Posterior cingulate gyrus (tissue), 11 donors: ENCODE measurements at regions of chr2 and their contacts with region 1.

Region 1: DNA sequence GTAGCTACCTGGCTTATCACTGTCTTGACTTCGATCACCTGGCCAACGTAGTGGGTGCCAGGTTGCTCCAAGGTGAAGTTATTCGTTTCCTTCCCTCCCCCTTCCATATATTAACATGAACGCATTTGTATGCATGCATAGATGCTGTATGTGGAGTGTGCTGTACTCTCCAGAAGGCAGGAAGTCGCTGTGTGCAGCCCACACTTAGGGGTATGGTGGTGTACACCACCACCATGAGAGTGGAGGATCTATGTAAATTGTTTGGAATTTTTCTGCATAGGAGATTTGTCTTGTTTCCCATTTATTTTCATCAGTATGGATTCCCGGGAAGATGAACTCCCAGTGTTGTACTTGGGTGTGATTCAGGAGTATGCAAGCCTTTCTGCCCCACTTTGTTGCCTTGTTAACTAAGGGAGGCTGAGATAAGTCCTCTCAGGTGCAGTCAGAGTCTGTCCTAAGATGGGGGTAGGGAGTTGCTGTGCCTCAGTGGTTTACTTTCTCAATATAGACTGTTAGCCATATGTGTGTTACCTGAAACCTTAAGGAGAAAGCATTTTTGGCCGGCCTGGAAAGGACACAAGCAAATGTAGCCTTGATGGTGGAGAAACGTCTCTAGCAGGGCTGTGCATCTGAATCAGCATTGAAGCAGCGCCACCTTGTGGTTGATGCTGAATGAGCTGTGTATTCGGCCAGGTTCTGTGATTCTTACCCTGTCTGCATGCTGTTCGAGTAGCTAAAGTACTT is 149.8 kb downstream of the TANC1 start:
- DNase-seq: peak; percentile 75 to 98 (median 94)

Region 2: DNA sequence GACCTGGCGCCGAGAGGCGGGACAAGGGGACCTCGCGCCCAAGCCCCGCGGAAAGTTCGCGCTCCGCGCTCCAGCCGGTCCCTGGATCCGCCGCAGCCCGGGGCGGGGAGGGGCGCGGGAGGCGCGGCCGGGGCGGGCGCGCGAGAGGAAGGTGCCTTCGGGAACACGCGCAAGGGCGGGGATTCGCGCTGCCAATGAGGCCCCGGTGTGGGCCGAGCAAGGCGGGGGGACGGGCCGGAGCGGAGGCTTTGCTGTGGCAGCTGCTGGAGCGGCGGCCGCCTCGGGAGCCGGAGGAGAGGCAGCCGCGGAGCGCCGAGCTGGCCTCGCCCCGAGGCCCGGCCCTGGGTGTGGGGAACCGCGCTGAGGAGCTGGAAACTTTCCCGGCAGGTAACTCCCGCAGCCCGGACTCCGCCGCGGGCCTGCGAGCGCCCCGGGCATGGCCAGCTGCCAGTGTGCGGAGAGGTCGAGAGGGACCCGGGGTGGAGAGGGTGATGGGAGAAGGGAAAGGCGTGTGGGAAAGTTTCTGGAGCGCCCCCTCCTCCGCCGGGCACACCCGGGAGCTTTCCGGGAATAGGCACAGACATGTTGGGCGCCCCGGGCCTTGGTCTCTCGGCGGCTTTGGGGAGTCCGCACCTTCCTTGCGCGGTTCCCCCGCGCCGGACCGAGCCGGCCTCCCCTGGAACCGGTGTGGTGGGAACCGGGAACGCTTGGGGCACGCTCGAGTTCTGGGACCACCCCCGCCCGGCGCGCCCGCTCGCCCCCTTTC is 149.7 kb before region 1 on chr2 and contains the start of gene TANC1:
- intact Hi-C with region 1: loop called (anchors 5 kb)
- DNase-seq: peak; percentile 83 to 98 (median 91)

Region 3: DNA sequence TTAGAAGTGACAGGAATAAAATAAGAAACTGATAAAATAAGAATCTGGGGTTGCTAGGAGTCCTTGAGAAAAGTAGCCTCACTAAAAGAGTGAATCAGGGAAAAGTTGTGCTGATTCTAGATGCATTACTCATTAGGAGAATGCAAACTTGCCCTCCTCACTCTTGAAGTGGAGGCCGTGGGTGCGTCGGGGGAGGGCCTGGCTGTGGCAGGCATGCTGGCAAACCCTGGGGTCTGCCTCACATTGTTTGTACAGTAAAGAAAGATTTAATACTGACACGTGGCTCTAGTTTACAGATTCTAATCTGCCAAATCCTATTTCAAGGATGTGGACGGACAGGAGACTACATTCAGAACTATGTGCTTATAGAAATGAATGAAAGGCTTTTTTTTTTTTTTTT is 107.9 kb before region 1 on chr2:
- intact Hi-C with region 1: no loop called
- DNase-seq: no peak

Region 4: GRCh38 chr2:160022162-160022561 is 903.9 kb after region 1 on chr2:
- intact Hi-C with region 1: no loop called
- DNase-seq: no peak